GM12878 (cell line): ENCODE measurements at regions of chr14 and their contacts with region 1.

Region 1: GRCh38 chr14:90235179-90235976 is 21.0 kb upstream of the PSMC1 start:
- DNase-seq: no peak
- ATAC-seq: peak; percentile 91
- H3K4me3 ChIP-seq: no peak overlapping the region
- H3K27ac ChIP-seq: no peak overlapping the region
- H3K4me1 ChIP-seq: no peaks in the 10 kb centered on the region
- H3K27me3 ChIP-seq: no peaks in the 10 kb centered on the region
- CTCF ChIP-seq: peak; percentile 83 to 96 (median 89)
- EP300 ChIP-seq: no peak
- POLR2A ChIP-seq: no peak
- RAD21 ChIP-seq: peak; percentile 78

Region 2: DNA sequence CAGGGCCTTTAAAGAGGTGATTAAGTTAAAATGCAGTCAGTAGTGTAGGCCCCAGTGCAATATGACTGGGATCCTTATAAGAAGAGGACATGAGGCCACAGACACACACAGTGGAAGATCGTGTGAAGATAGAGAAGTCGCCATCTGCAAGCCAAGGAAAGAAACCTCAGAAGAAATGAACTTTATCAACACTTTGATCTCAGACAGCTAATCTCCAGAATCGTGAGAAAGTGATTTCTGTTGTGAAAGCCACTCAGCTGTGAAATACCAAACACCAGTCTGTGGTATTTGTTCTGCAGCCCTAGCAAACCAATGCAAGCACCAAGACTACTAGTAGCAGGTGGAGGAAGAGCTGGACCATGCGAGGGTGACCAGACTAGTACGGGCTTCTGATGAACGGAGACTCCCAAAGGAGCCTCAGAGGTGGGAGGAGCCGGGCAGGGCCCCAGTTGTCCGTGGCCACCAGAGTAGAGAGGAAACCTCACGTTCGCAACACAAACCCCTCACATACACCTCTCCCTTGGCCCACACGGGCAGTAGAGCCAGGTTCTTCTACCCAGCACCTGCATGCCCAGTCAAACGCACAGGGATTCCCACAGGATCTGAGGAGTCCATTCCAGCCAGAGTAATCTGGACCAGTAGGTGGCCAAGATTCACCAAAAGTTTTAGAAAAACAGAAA is 1167.9 kb before region 1 on chr14:
- CTCF ChIA-PET with region 1: no interaction called
- POLR2A ChIA-PET with region 1: no interaction called
- RAD21 ChIA-PET with region 1: no interaction called
- SMC1A ChIA-PET with region 1: no interaction called
- in situ Hi-C with region 1: no loop called
- intact Hi-C with region 1: no loop called
- DNase-seq: no peak
- ATAC-seq: no peak
- H3K4me3 ChIP-seq: no peak overlapping the region
- H3K27ac ChIP-seq: no peak overlapping the region
- H3K4me1 ChIP-seq: no peaks in the 10 kb centered on the region
- H3K27me3 ChIP-seq: peaks cover 0 to 2% of the 10 kb centered on the region in 2 experiments; a peak in 1 of 4 replicates
- CTCF ChIP-seq: no peak
- EP300 ChIP-seq: no peak
- POLR2A ChIP-seq: no peak
- RAD21 ChIP-seq: no peak

Region 3: DNA sequence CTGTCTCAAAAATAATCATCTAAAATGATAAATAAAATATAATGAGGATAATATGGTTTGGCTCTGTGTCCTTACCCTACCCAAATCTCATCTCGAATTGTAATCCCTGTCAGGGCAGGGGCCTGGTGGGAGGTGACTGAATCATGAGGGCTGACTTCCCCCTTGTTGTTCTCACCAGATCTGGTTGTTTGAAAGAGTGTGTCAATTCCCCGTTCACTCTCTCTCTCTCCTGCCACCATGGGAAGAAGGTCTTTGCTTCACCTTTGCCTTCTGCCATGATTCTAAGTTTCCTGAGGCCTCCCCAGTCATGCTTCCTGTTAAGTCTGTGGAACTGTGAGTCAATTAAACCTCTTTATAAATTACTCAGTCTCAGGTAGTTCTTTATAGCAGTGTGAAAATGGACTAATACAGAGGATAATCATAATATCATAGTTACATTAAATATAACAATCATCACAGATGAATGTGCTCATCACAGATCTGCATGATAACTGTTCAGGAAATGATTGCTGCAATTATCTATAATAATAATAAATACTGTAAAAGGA is 293.5 kb before region 1 on chr14:
- CTCF ChIA-PET with region 1: interaction called, 62 read pairs
- POLR2A ChIA-PET with region 1: no interaction called
- RAD21 ChIA-PET with region 1: interaction called, 11 read pairs
- SMC1A ChIA-PET with region 1: interaction called, 8 read pairs
- in situ Hi-C with region 1: loop called (anchors 5 kb)
- intact Hi-C with region 1: loop called (anchors 1 kb)
- DNase-seq: no peak
- ATAC-seq: no peak
- H3K4me3 ChIP-seq: no peak overlapping the region
- H3K27ac ChIP-seq: no peak overlapping the region
- H3K4me1 ChIP-seq: no peaks in the 10 kb centered on the region
- H3K27me3 ChIP-seq: no peaks in the 10 kb centered on the region
- CTCF ChIP-seq: no peak
- EP300 ChIP-seq: no peak
- POLR2A ChIP-seq: no peak
- RAD21 ChIP-seq: no peak